SK-N-SH (cell line): ENCODE measurements at regions of chr3 and their contacts with region 1.

Region 1: GRCh38 chr3:13495921-13496723 is 16.0 kb downstream of the HDAC11 start:
- DNase-seq: peak; percentile 84
- H3K4me3 ChIP-seq: no peak overlapping the region
- H3K27ac ChIP-seq: no peak overlapping the region
- H3K4me1 ChIP-seq: peaks cover 0 to 11% of the 10 kb centered on the region in 2 experiments; a peak in 1 of 4 replicates
- H3K27me3 ChIP-seq: no peaks in the 10 kb centered on the region
- CTCF ChIP-seq: peak; percentile 91
- EP300 ChIP-seq: no peak
- RAD21 ChIP-seq: peak; percentile 99

Region 2: GRCh38 chr3:12967606-12968351 is 528.3 kb before region 1 on chr3:
- CTCF ChIA-PET with region 1: no interaction called
- POLR2A ChIA-PET with region 1: no interaction called
- DNase-seq: peak; percentile 100
- H3K4me3 ChIP-seq: peak overlapping the region; percentile 65 to 82
- H3K27ac ChIP-seq: peak overlapping the region in 1 of 2 experiments; percentile 21; a peak in 2 of 4 replicates
- H3K4me1 ChIP-seq: peaks cover 0 to 56% of the 10 kb centered on the region in 2 experiments; a peak in 2 of 4 replicates
- H3K27me3 ChIP-seq: no peaks in the 10 kb centered on the region
- CTCF ChIP-seq: no peak
- EP300 ChIP-seq: no peak
- RAD21 ChIP-seq: no peak

Region 3: DNA sequence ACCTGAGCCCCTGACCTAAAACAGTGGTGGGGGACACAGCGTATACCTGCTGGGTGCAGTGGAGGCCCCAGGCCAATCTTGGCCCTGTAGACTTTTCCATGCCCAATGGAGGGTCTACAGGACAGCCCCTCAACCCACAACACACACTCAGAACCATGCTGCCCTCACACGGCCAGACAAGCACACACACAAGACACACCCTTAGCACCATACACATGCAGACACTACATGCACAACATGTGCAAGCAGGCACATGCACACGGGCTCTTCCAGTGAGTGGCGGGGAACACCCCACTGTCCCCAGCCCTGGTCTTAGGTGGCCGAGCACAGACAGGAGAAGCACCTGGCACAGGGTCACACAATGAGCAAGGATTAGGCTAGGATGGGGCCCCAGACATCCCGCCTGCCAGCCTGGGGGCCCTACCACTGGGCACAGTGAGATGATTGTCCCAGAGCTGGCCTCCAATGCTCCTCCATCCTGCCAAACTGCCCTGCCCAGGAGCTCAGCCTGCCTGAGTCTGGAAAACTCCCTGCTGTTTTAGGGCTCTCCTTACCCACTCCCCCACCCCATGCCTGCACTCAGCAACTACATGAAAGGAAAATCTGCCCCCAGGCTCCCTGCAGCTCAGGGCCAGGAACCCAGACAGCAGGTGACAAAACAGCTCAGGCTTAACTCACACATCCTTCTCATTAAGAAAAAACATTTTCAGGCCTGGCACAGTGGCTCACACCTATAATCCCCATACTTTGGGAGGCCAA is 438.7 kb before region 1 on chr3:
- CTCF ChIA-PET with region 1: no interaction called
- POLR2A ChIA-PET with region 1: no interaction called
- DNase-seq: no peak
- H3K4me3 ChIP-seq: no peak overlapping the region
- H3K27ac ChIP-seq: no peak overlapping the region
- H3K4me1 ChIP-seq: peaks cover 0 to 10% of the 10 kb centered on the region in 2 experiments; a peak in 1 of 4 replicates
- H3K27me3 ChIP-seq: no peaks in the 10 kb centered on the region
- CTCF ChIP-seq: no peak
- EP300 ChIP-seq: no peak
- RAD21 ChIP-seq: no peak

Region 4: DNA sequence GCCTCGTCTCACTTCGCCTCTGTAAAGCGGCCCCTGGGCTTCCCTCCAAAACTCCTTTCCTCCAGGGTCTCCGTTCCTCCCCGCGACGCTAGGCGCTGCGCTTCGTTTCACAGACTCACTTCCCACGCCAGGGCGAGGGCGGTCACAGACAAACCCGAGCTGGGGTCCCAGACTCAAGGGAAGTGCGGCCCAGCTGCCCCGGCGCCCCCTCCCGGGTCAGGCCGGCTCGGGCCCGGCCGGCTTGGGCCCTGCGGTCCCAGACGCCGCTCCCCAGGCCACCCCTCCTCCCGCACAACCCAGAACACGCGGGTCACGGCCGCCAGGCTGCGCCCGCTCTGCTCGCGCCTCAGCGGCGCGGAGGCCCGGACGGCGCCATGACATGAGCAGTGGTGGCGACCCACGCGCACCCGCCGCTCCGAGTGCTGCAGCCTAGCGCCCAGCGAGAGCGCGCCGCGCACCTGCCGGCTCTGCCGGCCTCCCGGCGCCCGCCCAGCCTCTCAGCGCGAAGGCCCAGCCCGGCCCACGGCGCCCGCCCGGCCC is 76.5 kb before region 1 on chr3:
- CTCF ChIA-PET with region 1: no interaction called
- POLR2A ChIA-PET with region 1: no interaction called
- DNase-seq: peak; percentile 86
- H3K4me3 ChIP-seq: peak overlapping the region in 1 of 2 experiments; percentile 58; a peak in 2 of 4 replicates
- H3K27ac ChIP-seq: peak overlapping the region in 1 of 2 experiments; percentile 63; a peak in 2 of 4 replicates
- H3K4me1 ChIP-seq: peaks cover 3 to 26% of the 10 kb centered on the region in 2 experiments; a peak in 2 of 4 replicates
- H3K27me3 ChIP-seq: 0 out of 2 replicates have a peak, but pooled peaks cover 8% of the 10 kb centered on the region
- CTCF ChIP-seq: no peak
- EP300 ChIP-seq: no peak
- RAD21 ChIP-seq: no peak

Region 5: GRCh38 chr3:13507769-13508339 is 11.7 kb after region 1 on chr3:
- CTCF ChIA-PET with region 1: interaction called, 31 read pairs
- POLR2A ChIA-PET with region 1: no interaction called
- DNase-seq: peak; percentile 80
- H3K4me3 ChIP-seq: no peak overlapping the region
- H3K27ac ChIP-seq: peak overlapping the region in 1 of 2 experiments; percentile 58; a peak in 2 of 4 replicates
- H3K4me1 ChIP-seq: peaks cover 0 to 19% of the 10 kb centered on the region in 2 experiments; a peak in 1 of 4 replicates
- H3K27me3 ChIP-seq: no peaks in the 10 kb centered on the region
- CTCF ChIP-seq: no peak
- EP300 ChIP-seq: no peak
- RAD21 ChIP-seq: no peak

Region 6: DNA sequence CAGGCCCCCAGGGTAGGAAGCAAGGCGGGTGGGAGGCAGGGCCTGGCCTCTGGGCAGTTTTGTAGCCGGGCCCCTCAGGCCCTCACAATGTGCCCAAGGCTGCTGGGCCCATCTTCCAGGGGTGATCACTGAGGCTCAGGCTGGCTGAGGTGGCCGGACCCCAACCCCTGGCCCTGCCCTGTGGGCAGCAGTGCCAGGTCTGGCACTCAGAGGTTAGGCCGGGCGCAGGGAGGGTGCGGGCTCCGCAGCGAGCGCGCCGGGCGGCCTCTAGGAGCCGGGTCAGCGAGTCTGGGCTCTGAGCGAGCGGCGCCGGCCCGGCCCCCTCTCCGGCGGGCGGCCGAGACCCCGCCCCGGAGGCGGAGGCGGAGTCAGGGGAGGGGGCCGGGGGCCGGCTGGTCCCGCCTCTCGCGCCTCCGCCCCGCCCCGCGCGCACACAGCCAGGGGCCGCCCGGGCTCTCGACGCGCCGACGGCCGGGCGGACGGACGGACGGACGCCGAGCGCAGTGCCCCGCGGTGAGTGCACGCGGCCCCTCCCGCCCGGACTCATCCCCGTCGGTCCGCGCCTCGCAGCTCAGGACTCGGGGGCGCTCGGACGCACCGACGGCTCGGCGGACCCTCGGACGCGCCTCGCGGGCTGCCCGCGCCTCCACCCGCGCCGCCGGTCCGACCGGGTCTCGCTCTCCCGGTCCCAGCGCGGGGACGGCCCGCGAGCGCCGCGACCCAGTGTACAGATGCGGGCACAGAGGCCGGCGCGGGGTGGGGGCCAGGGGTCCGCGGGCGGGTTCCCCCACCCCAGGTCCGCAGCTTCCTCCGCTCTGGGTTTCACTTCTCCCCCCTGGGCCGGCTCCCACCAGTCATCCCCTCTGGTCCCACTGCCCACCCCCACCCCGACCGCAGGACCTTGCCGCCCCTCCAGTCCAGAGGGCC is 52.8 kb after region 1 on chr3 and contains the start of gene FBLN2:
- CTCF ChIA-PET with region 1: interaction called, 18 read pairs
- POLR2A ChIA-PET with region 1: no interaction called
- DNase-seq: peak; percentile 99
- H3K4me3 ChIP-seq: peak within 1 kb of the TSS in 1 of 2 experiments; percentile 38; a peak in 2 of 4 replicates
- H3K27ac ChIP-seq: no peak within 1 kb of the TSS; a peak in 1 of 4 replicates
- H3K4me1 ChIP-seq: peaks cover 0 to 35% of the 10 kb centered on the region in 2 experiments; a peak in 1 of 4 replicates
- H3K27me3 ChIP-seq: no peaks in the 10 kb centered on the region
- CTCF ChIP-seq: no peak
- EP300 ChIP-seq: no peak
- RAD21 ChIP-seq: no peak
- polyA plus RNA-seq, gene FBLN2: 4.8 and 5.2 TPM in 2 replicates

Region 7: GRCh38 chr3:13584427-13585300 is 88.5 kb after region 1 on chr3:
- CTCF ChIA-PET with region 1: interaction called, 14 read pairs
- POLR2A ChIA-PET with region 1: no interaction called
- DNase-seq: no peak
- H3K4me3 ChIP-seq: no peak overlapping the region
- H3K27ac ChIP-seq: no peak overlapping the region
- H3K4me1 ChIP-seq: peaks cover 0 to 37% of the 10 kb centered on the region in 2 experiments; a peak in 1 of 4 replicates
- H3K27me3 ChIP-seq: no peaks in the 10 kb centered on the region
- CTCF ChIP-seq: no peak
- EP300 ChIP-seq: no peak
- RAD21 ChIP-seq: no peak

Region 8: DNA sequence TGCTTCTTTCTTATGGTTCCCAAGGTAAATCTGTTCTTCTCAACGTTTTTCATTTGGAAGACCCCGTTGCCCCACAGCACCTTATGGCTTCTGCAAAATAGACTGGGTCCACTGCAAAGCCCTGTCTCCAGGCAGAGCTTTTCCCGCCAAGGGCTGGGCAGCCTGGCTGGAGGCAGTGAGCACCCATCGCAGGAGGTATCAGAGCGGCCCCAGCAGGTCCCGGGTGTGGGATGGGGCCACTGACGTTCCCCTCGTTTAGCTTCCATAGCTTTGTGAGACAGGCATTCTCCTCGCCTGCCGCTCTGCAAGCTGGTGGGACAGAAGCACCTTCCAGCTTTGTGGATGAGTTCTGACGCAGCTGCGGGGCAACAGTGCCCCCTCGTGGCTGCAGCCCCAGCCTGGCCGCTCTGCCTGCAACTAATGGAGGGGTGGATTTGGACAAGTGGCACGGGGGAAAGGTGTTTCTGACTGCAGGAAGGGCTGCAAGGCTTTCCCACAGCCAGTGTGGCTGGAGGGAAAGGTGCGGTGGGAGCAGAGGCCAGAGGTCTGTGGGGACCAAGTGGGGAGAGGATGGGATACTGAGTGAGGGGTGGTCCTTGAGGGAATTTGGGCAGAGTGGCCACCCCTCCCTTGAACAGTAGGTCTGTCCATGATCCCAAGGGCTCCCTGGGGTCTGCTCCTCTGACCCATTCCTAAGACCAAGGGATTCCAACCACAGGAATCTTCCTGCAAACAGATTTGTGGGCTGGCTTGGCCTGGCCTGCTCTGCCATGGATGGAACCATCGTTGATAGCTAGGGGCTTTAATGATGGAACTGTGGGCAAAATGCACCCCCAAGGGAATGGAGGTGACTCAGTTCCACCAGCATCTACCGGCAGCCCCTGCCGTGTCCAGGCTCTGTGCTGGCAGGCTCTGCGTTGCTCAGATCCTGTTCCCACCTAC is 152.2 kb after region 1 on chr3:
- CTCF ChIA-PET with region 1: interaction called, 872 read pairs
- POLR2A ChIA-PET with region 1: interaction called, 6 read pairs
- DNase-seq: peak; percentile 94
- H3K4me3 ChIP-seq: peak overlapping the region in 1 of 2 experiments; percentile 42; a peak in 1 of 4 replicates
- H3K27ac ChIP-seq: no peak overlapping the region
- H3K4me1 ChIP-seq: peaks cover 0 to 10% of the 10 kb centered on the region in 2 experiments; a peak in 1 of 4 replicates
- H3K27me3 ChIP-seq: no peaks in the 10 kb centered on the region; the same call in 1 of the 2 replicates
- CTCF ChIP-seq: peak; percentile 98
- EP300 ChIP-seq: no peak
- RAD21 ChIP-seq: peak; percentile 99

Region 9: DNA sequence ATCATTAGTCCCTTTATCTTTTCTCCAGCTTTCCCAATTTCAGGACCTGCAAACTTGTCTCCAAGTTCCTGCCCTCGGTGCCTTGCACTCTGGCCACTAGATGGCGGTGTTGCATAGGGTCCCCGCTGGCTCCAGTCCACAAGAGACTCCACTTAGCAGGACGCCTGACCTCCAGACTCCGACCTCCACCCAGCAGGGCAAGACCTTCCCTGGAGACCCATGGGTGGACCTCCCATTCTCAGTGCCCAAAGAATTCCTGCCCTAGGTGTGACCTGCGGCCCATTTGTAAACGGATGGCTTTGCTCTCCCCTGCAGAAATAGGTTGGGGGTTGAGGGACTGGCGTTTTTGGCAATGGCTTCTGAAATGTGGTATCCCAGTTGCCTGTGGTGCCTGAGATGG is 765.1 kb after region 1 on chr3:
- CTCF ChIA-PET with region 1: no interaction called
- POLR2A ChIA-PET with region 1: no interaction called
- DNase-seq: peak; percentile 88
- H3K4me3 ChIP-seq: peak overlapping the region in 1 of 2 experiments; percentile 42; a peak in 1 of 4 replicates
- H3K27ac ChIP-seq: no peak overlapping the region
- H3K4me1 ChIP-seq: no peaks in the 10 kb centered on the region
- H3K27me3 ChIP-seq: 0 out of 2 replicates have a peak, but pooled peaks cover 6% of the 10 kb centered on the region
- CTCF ChIP-seq: peak; percentile 98
- EP300 ChIP-seq: no peak
- RAD21 ChIP-seq: peak; percentile 99